ENCODE measurements at regions of chr2 and their contacts with region 1.

Region 1: DNA sequence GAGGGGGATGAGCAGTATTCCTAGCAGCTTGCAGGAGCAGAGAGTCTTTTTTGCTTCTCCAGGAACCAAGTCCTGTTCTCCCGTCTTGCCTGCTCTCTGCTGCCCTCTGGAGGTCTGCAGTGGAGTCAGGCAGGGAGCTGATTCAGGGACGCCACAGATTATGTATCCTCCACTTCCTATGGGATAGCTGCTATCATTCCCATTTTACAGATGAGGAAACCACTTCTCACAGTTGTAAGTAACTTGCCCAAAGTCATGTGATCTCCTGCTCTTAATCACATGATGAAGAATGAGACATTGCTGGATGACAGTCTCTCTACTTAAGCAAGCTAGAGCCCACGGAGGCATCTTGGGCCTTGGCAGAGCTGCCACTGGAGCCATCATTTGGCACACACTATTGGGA is 8.3 kb downstream of the SLC4A5 start:
- DNase-seq: peak; percentile 86
- H3K4me3 Mint-ChIP-seq: no peak overlapping the region
- H3K27ac Mint-ChIP-seq: no peak overlapping the region
- H3K4me1 Mint-ChIP-seq: no peaks in the 10 kb centered on the region
- H3K27me3 Mint-ChIP-seq: no peaks in the 10 kb centered on the region

Region 2: GRCh38 chr2:74045454-74045853 is 289.5 kb before region 1 on chr2:
- CTCF ChIA-PET with region 1: no interaction called
- intact Hi-C with region 1: no loop called
- DNase-seq: no peak
- H3K4me3 Mint-ChIP-seq: no peak overlapping the region
- H3K27ac Mint-ChIP-seq: no peak overlapping the region
- H3K4me1 Mint-ChIP-seq: peaks cover 33% of the 10 kb centered on the region
- H3K27me3 Mint-ChIP-seq: no peaks in the 10 kb centered on the region

Region 3: GRCh38 chr2:74104839-74105238 is 230.1 kb before region 1 on chr2:
- CTCF ChIA-PET with region 1: no interaction called
- intact Hi-C with region 1: no loop called
- DNase-seq: no peak
- H3K4me3 Mint-ChIP-seq: no peak overlapping the region
- H3K27ac Mint-ChIP-seq: no peak overlapping the region
- H3K4me1 Mint-ChIP-seq: no peaks in the 10 kb centered on the region
- H3K27me3 Mint-ChIP-seq: no peaks in the 10 kb centered on the region

Region 4: GRCh38 chr2:74261204-74261864 is 73.6 kb before region 1 on chr2:
- CTCF ChIA-PET with region 1: interaction called, 14 read pairs
- intact Hi-C with region 1: no loop called
- DNase-seq: peak; percentile 24
- H3K4me3 Mint-ChIP-seq: no peak overlapping the region
- H3K27ac Mint-ChIP-seq: no peak overlapping the region
- H3K4me1 Mint-ChIP-seq: peaks cover 2% of the 10 kb centered on the region
- H3K27me3 Mint-ChIP-seq: no peaks in the 10 kb centered on the region

Region 5: DNA sequence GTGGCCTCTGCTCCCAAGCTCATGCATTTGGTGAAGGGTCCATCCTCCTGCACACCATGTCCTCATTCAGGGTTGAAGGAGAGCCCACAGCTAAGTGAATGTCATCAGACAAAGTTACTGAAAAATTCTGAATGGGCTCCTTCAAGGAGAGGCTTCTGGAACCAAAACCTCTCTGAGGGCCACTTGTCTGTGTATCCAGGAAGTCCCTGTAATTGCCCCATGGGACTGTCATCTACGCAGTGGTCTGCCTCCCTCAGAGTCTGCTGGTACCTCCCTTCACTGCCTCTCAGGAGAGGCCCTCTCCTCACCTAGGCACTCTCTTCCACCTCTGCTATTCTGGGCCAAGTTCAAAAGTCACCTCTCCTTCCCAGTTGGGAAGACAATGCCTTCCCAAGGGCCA is 59.7 kb before region 1 on chr2:
- CTCF ChIA-PET with region 1: interaction called, 58 read pairs
- intact Hi-C with region 1: no loop called
- DNase-seq: no peak
- H3K4me3 Mint-ChIP-seq: no peak overlapping the region
- H3K27ac Mint-ChIP-seq: no peak overlapping the region
- H3K4me1 Mint-ChIP-seq: no peaks in the 10 kb centered on the region
- H3K27me3 Mint-ChIP-seq: no peaks in the 10 kb centered on the region

Region 6: DNA sequence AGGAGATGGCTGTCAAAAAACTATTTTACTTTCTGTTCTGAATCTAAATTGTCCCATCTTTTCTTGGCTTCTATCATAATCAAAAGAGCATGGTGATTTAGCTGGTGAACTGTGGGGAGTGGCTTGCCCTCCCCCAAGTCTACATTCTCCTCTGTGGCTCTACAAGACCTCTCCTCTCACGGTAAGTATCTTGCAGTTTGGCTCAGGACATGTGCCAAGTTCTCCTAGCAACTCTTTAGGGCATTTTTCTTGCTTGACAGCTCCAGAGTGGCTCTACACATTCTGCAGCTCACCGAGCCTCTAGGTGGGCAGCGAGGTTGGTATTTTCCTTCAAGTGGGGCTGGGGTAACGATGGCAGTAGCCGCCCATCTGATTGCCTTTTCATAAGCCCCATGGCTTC is 20.8 kb before region 1 on chr2:
- CTCF ChIA-PET with region 1: interaction called, 15 read pairs
- intact Hi-C with region 1: no loop called
- DNase-seq: no peak
- H3K4me3 Mint-ChIP-seq: no peak overlapping the region
- H3K27ac Mint-ChIP-seq: no peak overlapping the region
- H3K4me1 Mint-ChIP-seq: no peaks in the 10 kb centered on the region
- H3K27me3 Mint-ChIP-seq: no peaks in the 10 kb centered on the region

Region 7: GRCh38 chr2:74357627-74358026 is 22.7 kb after region 1 on chr2:
- CTCF ChIA-PET with region 1: interaction called, 14 read pairs
- intact Hi-C with region 1: no loop called
- DNase-seq: no peak
- H3K4me3 Mint-ChIP-seq: no peak overlapping the region
- H3K27ac Mint-ChIP-seq: no peak overlapping the region
- H3K4me1 Mint-ChIP-seq: no peaks in the 10 kb centered on the region
- H3K27me3 Mint-ChIP-seq: no peaks in the 10 kb centered on the region

Region 8: DNA sequence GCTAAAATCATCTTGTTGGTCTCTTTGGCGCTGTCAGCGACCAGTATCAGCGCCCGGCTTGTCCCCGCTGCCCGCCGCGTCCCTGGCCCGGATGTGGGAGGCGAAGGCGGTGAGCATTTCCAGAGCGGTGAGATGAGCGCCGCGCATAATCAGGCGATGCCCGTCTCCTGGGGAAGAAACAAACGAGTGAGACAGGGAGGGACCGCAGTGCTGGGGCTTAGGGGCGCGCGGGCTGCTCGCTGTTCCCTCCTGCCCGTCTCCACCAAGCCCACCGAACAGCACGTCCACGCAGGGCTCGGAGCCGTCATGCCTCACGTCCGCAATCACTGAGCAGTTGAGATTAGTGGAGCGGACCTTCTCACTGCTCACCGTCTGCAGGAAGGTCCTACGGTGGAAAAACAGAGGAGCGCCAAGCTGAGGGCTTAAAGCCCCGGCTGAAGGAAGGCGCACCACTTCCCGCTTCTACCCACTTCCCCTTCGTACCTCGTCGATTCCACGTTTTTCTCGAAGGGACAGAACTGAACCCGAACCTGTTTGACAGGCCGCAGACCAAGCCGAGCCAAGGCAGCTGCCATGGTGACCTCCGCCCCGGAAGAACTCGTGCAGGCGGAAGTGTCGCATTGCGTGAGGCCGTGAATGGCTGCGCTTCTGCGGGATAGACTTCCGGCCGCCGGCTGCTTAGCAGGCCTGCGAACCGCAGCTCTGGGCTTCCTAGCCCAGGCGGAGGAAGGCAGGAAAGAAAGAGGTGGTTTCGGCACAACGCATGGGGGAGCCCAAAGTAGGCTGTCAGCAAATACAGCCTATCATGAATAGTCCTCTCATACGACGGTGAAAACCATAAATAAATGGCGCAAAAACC is 137.4 kb after region 1 on chr2 and contains the start of gene MRPL53:
- CTCF ChIA-PET with region 1: interaction called, 3 read pairs
- intact Hi-C with region 1: loop called (anchors 2 kb)
- DNase-seq: peak; percentile 97
- H3K4me3 Mint-ChIP-seq: peak within 1 kb of the TSS; percentile 98
- H3K27ac Mint-ChIP-seq: peak within 1 kb of the TSS; percentile 98
- H3K4me1 Mint-ChIP-seq: peaks cover 20% of the 10 kb centered on the region
- H3K27me3 Mint-ChIP-seq: no peaks in the 10 kb centered on the region
- total RNA-seq, gene MRPL53: 112 to 117 TPM

Measured in activated naive CD4-positive, alpha-beta T cell treated with anti-CD3 and anti-CD28 coated beads for 36 hours (primary cell).